Panc1 (cell line): ENCODE measurements at regions of chr12 and their contacts with region 1.

Region 1: DNA sequence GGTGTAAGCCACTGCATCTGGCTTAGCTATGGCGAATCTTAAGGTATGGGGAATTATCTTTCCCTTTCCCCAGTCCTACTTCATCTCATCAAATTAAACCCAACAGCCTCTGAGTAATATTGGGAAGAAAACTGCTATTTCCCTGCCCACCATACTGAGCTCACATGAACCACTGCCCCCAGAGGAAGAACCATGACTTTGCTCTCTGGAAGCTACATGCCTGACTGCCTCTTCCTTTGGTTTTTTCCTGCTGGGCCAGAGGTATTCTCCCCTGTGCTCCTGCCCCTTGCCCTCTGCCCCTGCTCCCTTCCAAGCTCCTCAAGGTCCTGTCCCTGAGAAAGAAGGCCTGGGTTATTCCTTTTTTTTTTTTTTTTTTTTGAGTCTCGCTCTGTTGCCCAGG is 15.2 kb downstream of the RILPL2 start:
- DNase-seq: no peak
- ATAC-seq: no peak
- H3K4me3 ChIP-seq: no peak overlapping the region
- H3K27ac ChIP-seq: no peak overlapping the region
- H3K4me1 ChIP-seq: no peaks in the 10 kb centered on the region
- H3K27me3 ChIP-seq: no peaks in the 10 kb centered on the region
- CTCF ChIP-seq: no peak

Region 2: DNA sequence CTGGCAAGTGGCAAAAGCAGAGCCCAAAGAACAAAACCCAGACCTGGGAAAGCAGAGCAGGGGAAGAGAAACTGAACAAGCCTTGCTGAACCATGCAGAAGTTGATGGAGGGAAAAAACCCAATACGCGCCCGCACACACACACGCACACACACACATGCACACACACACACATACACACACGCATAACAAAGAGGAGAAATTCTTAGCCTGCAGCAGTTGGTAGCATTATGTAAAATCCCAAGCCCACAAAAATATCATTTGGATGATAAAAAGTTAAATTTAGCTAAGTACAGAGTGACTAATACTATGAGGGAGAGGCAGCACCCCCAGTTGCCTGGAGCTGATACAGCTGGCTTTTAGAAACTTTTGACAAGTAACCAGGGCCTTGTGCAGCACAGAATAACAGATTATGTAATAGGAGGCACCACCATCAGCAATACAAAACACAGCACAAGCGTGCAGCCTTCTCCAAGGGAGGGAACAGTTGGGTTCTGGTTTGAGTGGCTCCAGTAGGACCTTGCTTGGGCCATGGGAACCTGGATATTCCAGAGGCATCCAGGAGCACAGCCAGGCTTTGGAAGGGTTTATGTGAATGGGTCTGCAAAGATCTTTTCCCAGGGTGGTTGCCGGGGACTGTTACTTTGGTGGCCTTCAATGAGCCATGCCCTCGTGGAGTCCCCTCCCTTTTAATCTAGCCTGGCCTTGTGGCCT is 305.7 kb before region 1 on chr12:
- CTCF ChIA-PET with region 1: no interaction called
- POLR2A ChIA-PET with region 1: no interaction called
- in situ Hi-C with region 1: no loop called
- intact Hi-C with region 1: no loop called
- DNase-seq: no peak
- ATAC-seq: no peak
- H3K4me3 ChIP-seq: no peak overlapping the region
- H3K27ac ChIP-seq: no peak overlapping the region
- H3K4me1 ChIP-seq: peaks cover 1% of the 10 kb centered on the region
- H3K27me3 ChIP-seq: no peaks in the 10 kb centered on the region
- CTCF ChIP-seq: no peak

Region 3: GRCh38 chr12:123131879-123132452 is 289.3 kb before region 1 on chr12:
- CTCF ChIA-PET with region 1: no interaction called
- POLR2A ChIA-PET with region 1: no interaction called
- in situ Hi-C with region 1: no loop called
- intact Hi-C with region 1: no loop called
- DNase-seq: no peak
- ATAC-seq: peak; percentile 37
- H3K4me3 ChIP-seq: no peak overlapping the region
- H3K27ac ChIP-seq: peak overlapping the region; percentile 48; the same call in 1 of the 2 replicates
- H3K4me1 ChIP-seq: peaks cover 27% of the 10 kb centered on the region
- H3K27me3 ChIP-seq: no peaks in the 10 kb centered on the region
- CTCF ChIP-seq: no peak

Region 4: DNA sequence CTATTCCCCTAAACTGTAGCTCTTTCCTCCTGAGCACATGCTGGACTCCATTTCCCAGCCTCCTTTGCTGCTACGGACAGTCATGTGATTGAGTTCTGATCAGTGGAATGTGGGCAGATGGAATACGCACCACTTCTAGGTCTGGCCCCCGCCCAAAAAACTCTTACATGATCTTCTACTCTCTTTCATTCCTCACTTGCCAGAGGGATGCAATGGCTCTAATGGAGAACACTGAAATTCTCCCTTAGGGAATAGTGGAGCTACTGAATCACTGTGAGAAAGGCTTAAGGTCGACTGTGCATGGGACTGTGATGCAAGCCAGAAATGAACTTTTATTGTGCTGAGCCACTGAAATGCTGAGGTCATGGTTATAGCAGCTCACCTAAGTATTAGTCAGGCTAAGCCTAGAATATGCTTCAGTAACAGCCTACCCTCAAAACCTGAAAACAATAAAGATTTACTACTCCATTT is 150.1 kb after region 1 on chr12:
- CTCF ChIA-PET with region 1: no interaction called
- POLR2A ChIA-PET with region 1: interaction called, 12 read pairs
- in situ Hi-C with region 1: no loop called
- intact Hi-C with region 1: no loop called
- DNase-seq: no peak
- ATAC-seq: peak; percentile 82
- H3K4me3 ChIP-seq: peak overlapping the region in 1 of 2 experiments; percentile 19; a peak in 2 of 4 replicates
- H3K27ac ChIP-seq: no peak overlapping the region
- H3K4me1 ChIP-seq: no peaks in the 10 kb centered on the region
- H3K27me3 ChIP-seq: no peaks in the 10 kb centered on the region
- CTCF ChIP-seq: no peak